ENCODE measurements at regions of chr18 and their contacts with region 1.

Region 1: DNA sequence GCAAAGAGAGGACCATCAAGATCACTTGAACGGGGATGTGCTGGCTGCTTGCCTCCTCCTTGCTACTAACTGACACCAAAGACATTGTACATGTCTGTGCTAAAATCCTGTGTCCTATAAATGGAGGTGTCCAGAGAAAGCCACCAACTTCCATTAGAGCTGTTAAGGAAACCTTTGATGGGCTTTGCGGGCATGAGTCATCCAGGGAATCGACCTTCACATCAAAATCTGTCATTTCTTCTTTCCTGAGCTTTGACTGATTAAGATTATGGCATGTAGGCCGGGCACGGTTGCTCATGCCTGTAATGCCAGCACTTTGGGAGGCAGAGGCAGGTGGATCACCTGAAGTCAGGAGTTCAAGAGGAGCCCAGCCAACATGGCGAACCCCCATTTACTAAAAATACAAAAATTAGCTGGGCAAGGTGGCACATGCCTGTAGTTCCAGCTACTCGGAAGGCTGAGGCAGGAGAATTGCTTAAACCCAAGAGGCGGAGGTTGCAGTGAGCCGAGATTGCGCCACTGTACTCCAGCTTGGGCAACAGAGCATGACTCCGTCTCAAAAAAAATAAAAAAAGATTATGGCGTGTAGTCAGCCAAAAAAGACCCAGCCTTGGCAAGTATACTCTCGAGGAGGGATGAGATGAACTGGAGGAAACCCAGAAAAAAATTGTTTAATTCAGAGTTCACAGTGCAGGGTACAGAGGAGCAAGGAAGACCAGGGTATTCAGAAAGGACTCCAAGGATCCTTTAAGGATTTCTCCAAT is 115.8 kb downstream of the CABLES1 start:
- DNase-seq: peak; percentile 72 to 77
- H3K4me3 ChIP-seq: no peak overlapping the region
- H3K27ac ChIP-seq: peak overlapping the region; percentile 49 to 78 (median 68)
- H3K4me1 ChIP-seq: peaks cover 17 to 18% of the 10 kb centered on the region in 2 donors
- H3K27me3 ChIP-seq: no peaks in the 10 kb centered on the region
- CTCF ChIP-seq: no peak
- POLR2A ChIP-seq: no peak

Region 2: DNA sequence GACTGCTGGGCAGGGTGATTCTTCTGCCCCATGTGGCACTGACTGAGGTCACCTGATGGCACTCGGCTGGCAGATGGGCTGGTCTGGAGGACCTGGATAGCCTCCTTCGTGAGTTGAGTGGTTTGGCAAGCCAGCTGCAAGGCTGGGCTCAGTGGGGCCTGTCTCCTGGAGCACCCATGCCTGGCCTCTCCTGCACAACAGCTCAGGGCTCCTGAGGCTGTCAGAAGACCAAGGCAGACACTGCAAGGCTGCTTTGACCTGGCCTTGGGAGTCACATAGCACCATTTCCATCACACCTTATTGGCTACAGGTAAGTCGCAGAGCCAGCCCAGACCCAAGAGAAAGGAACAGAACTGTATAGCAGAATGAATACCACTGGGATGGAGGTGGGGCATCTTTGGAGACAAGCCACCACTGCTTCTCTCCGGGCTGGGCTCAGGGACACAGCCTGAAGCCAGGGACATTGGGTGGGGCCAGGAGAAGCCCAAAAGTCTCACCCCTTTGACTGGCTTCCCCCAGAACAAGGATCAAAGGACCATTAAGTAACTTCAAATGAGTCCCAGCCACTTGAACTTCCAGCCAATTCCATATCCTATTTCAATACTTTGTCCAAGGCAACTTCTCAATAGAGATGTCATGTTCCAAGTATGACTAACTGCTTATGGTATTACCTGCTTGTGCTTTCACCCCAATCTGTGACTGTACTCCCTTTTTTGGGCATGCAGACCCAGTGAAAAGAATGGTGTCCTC is 40.6 kb after region 1 on chr18:
- intact Hi-C with region 1: loop called (anchors 5 kb)
- DNase-seq: peak; percentile 93 to 94
- H3K4me3 ChIP-seq: no peak overlapping the region
- H3K27ac ChIP-seq: peak overlapping the region; percentile 40 to 74 (median 57)
- H3K4me1 ChIP-seq: peaks cover 13 to 17% of the 10 kb centered on the region in 2 donors
- H3K27me3 ChIP-seq: no peaks in the 10 kb centered on the region
- CTCF ChIP-seq: no peak
- POLR2A ChIP-seq: no peak

Measured in thyroid gland (tissue), 4 donors.